Activated naive CD4-positive, alpha-beta T cell treated with anti-CD3 and anti-CD28 coated beads for 36 hours (primary cell): ENCODE measurements at regions of chr5 and their contacts with region 1.

Region 1: DNA sequence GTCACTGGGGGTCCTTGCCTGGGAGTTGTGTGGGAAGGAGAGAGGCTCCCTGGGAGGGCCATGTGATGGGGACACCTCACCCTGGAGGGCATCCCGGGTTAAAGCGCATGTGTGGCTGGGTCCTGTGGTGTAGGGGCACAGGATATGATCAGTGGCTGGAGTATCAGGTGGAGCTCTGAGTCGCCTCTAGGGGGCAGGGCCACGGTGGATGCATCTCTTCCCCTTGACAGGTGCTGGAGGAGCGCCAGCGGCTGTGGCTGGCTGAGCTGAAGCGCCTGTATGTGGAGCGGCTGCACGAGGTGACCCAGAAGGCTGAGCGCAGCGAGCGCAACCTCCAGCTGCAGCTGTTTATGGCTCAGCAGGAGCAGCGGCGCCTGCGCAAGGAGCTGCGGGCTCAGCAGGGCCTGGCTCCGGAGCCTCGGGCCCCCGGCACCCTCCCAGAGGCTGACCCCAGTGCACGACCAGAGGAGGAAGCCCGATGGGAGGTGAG is 7.6 kb downstream of the N4BP3 start:
- DNase-seq: peak; percentile 90
- H3K4me3 Mint-ChIP-seq: no peak overlapping the region
- H3K27ac Mint-ChIP-seq: no peak overlapping the region
- H3K4me1 Mint-ChIP-seq: peaks cover 20% of the 10 kb centered on the region
- H3K27me3 Mint-ChIP-seq: no peaks in the 10 kb centered on the region

Region 2: GRCh38 chr5:178090858-178091540 is 29.9 kb before region 1 on chr5:
- CTCF ChIA-PET with region 1: no interaction called
- intact Hi-C with region 1: no loop called
- DNase-seq: no peak
- H3K4me3 Mint-ChIP-seq: no peak overlapping the region
- H3K27ac Mint-ChIP-seq: no peak overlapping the region
- H3K4me1 Mint-ChIP-seq: peaks cover 17% of the 10 kb centered on the region
- H3K27me3 Mint-ChIP-seq: peaks cover 2% of the 10 kb centered on the region

Region 3: GRCh38 chr5:178137991-178138390 is 17.1 kb after region 1 on chr5:
- CTCF ChIA-PET with region 1: interaction called, 17 read pairs
- intact Hi-C with region 1: no loop called
- DNase-seq: no peak
- H3K4me3 Mint-ChIP-seq: no peak overlapping the region
- H3K27ac Mint-ChIP-seq: no peak overlapping the region
- H3K4me1 Mint-ChIP-seq: peaks cover 22% of the 10 kb centered on the region
- H3K27me3 Mint-ChIP-seq: no peaks in the 10 kb centered on the region

Region 4: DNA sequence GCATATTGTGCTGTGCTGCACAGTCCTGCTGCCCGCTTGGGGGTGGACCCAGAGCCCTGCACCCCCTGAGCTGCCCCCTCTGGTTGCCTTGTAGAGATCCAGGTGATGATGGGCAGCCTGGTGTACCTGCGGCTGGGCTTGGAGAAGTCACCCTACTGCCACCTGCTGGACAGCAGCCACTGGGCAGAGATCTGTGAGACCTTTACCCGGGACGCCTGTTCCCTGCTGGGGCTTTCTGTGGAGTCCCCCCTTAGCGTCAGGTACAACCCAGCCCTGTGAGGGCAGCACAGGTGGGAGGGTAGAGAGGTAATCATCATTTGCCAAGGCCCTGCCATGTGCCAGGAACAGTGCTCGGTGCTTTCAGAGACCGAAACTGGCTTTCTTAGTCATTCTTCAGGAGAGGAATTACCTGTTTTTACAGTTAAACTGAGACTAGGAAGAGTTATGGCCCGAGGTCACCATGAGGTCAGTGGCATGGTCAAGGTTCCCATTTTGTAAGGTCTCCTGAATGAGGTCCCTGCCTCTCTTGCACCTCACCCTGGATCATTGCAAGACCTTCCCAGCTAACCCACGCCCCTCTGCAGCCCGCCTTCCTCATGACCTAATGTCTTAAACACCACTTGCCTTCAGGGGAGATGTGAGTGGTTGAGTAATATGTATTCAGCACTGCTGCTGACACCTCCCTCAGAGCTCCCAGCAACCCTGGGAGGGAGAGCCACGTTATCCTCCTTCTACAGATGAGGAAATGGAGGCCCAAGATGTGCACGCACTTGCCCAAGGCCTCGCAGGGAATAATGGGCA is 25.3 kb after region 1 on chr5:
- CTCF ChIA-PET with region 1: interaction called, 8 read pairs
- intact Hi-C with region 1: loop called (anchors 1 kb)
- DNase-seq: peak; percentile 83
- H3K4me3 Mint-ChIP-seq: no peak overlapping the region
- H3K27ac Mint-ChIP-seq: peak overlapping the region; percentile 70
- H3K4me1 Mint-ChIP-seq: peaks cover 40% of the 10 kb centered on the region
- H3K27me3 Mint-ChIP-seq: no peaks in the 10 kb centered on the region

Region 5: DNA sequence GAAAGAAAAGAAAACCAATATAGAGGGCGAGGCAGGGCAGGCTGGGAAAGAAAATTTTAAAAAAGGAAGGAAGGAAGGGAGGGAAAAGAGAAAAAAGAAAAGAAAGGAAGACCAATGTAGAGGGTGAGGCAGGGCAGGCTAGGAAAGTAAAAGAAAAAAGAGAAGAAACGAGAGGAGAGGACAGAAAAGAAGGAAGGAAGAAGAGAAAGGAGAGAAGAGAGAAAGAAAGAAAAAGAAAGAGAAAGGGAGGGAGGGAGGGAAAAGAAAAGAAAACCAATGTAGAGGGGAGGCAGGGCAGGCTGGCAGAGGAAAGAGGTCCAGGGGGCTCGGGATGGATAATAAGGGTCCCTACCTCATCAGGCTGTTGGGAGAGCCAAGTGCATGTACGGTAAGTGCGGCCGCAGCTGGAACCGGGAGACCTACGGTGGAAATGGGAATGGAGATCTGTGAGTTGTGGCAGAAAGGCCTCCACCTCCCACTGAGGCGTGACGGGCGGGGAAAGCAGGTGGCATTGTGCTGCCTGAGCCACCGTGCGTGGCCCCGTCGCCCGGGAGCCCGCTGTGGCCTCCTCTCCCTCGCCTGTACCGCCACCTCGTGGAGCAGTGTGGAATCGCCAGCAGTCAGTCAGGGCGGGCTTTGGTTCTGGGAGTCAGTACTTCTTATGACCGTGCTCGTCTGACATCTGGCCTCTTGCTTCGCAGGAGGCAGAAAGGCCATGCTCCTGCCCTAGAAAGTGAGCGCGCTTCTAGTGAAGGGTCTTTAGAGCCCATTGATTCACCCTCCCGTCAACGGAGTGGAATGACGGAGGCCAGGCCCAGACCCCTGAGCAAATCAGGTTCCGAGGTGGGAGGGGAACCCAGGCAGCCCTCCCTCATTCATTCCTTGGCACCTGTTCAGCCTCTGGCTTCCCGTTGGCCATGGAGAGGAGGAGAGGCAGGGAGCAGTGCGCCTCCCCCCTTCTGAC is 43.1 kb after region 1 on chr5:
- CTCF ChIA-PET with region 1: interaction called, 4 read pairs
- intact Hi-C with region 1: loop called (anchors 2 kb)
- DNase-seq: peak; percentile 95
- H3K4me3 Mint-ChIP-seq: peak overlapping the region; percentile 38
- H3K27ac Mint-ChIP-seq: no peak overlapping the region
- H3K4me1 Mint-ChIP-seq: peaks cover 2% of the 10 kb centered on the region
- H3K27me3 Mint-ChIP-seq: peaks cover 11% of the 10 kb centered on the region

Region 6: DNA sequence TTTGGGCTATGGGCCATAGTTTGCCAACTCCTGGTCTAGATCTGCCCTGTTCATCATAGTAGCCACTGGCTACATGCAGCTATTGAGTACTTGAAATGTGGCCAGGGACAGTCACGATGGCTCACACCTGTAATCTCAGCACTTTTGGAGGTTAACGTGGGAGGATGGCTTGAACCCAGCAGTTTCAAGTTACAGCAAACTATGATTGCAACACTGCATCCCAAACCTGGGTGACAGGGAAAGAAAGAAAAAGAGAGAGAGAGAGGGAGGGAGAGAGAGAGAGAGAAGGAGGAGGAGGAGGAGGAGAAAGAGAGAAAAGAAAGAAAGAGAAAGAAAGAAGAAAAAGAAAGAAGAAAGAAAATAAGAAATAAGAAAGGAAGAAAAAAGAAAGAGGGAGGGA is 71.3 kb after region 1 on chr5:
- CTCF ChIA-PET with region 1: no interaction called
- intact Hi-C with region 1: no loop called
- DNase-seq: no peak
- H3K4me3 Mint-ChIP-seq: no peak overlapping the region
- H3K27ac Mint-ChIP-seq: no peak overlapping the region
- H3K4me1 Mint-ChIP-seq: peaks cover 2% of the 10 kb centered on the region
- H3K27me3 Mint-ChIP-seq: peaks cover 6% of the 10 kb centered on the region

Region 7: GRCh38 chr5:179326127-179326927 is 1205.4 kb after region 1 on chr5:
- CTCF ChIA-PET with region 1: no interaction called
- intact Hi-C with region 1: no loop called
- DNase-seq: no peak
- H3K4me3 Mint-ChIP-seq: no peak overlapping the region
- H3K27ac Mint-ChIP-seq: no peak overlapping the region
- H3K4me1 Mint-ChIP-seq: no peaks in the 10 kb centered on the region
- H3K27me3 Mint-ChIP-seq: peaks cover 17% of the 10 kb centered on the region